CD8-positive, alpha-beta memory T cell (primary cell): ENCODE measurements at regions of chr10 and their contacts with region 1.

Region 1: DNA sequence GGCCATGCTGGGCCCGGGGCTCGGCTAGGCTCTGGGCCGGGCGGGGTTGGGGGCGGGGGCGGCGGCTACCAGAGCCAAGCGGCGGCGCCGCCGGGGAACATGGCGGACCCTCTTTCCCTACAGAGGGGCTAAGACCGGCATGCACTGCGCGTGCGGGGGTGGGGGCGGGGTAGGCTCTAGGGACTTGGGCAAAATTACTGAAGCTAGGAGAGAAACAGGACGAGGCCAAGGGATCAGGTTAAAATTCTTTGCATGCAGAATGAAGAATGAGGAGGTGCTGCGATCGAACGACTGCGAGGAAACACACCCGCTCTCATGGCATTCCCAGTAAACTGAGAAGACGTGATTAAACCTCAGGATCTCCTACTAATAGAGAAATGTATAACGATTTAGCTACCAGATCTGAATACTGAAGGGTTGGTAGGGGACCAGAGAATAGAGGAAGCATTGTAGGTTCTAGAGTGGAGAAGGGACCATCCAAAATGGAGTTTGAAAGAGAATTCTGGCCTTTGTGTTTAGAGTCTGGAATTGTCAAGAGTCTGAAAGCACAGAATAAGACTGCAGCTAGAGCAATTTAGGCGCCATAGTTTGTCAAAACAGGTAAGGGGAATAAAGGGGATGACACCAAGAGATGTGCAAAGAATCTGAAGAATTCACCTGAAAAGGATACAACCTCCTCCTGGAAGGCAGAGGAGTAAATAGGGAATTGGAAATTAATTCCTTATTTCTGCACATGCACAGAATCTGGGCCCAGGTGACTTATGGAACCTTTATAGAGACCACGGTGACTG is at the start of gene PPP3CB:
- DNase-seq: peak; percentile 82 to 95 (median 86)
- H3K4me3 ChIP-seq: peak within 1 kb of the TSS; percentile 94
- H3K4me3 Mint-ChIP-seq: peak within 1 kb of the TSS; percentile 86 to 97 (median 94)
- H3K27ac ChIP-seq: peak within 1 kb of the TSS; percentile 92
- H3K27ac Mint-ChIP-seq: peak within 1 kb of the TSS; percentile 69 to 99 (median 96)
- H3K4me1 ChIP-seq: peaks cover 44% of the 10 kb centered on the region
- H3K4me1 Mint-ChIP-seq: peaks cover 47 to 59% (median 58%) of the 10 kb centered on the region in 3 donors
- H3K27me3 ChIP-seq: no peaks in the 10 kb centered on the region
- H3K27me3 Mint-ChIP-seq: no peaks in the 10 kb centered on the region
- total RNA-seq, gene PPP3CB: 44.0 to 44.1 TPM

Region 2: GRCh38 chr10:73432646-73433537 is 63.2 kb before region 1 on chr10:
- CTCF ChIA-PET with region 1: no interaction called
- POLR2A ChIA-PET with region 1: no interaction called
- DNase-seq: no peak
- H3K4me3 ChIP-seq: no peak overlapping the region
- H3K4me3 Mint-ChIP-seq: no peak overlapping the region
- H3K27ac ChIP-seq: no peak overlapping the region
- H3K27ac Mint-ChIP-seq: peak overlapping the region in 7 of 8 donors; percentile 14 to 80 (median 54)
- H3K4me1 ChIP-seq: peaks cover 9% of the 10 kb centered on the region
- H3K4me1 Mint-ChIP-seq: peaks cover 3 to 12% (median 10%) of the 10 kb centered on the region in 3 donors
- H3K27me3 ChIP-seq: no peaks in the 10 kb centered on the region
- H3K27me3 Mint-ChIP-seq: no peaks in the 10 kb centered on the region

Region 3: GRCh38 chr10:73480158-73480557 is 15.9 kb before region 1 on chr10:
- CTCF ChIA-PET with region 1: interaction called, 3 read pairs
- POLR2A ChIA-PET with region 1: interaction called, 16 read pairs
- DNase-seq: no peak
- H3K4me3 ChIP-seq: no peak overlapping the region
- H3K4me3 Mint-ChIP-seq: peak overlapping the region in 3 of 7 donors; percentile 1 to 61 (median 56)
- H3K27ac ChIP-seq: no peak overlapping the region
- H3K27ac Mint-ChIP-seq: peak overlapping the region in 4 of 8 donors; percentile 9 to 73 (median 32)
- H3K4me1 ChIP-seq: no peaks in the 10 kb centered on the region
- H3K4me1 Mint-ChIP-seq: peaks cover 24 to 52% (median 44%) of the 10 kb centered on the region in 3 donors
- H3K27me3 ChIP-seq: no peaks in the 10 kb centered on the region
- H3K27me3 Mint-ChIP-seq: no peaks in the 10 kb centered on the region

Region 4: DNA sequence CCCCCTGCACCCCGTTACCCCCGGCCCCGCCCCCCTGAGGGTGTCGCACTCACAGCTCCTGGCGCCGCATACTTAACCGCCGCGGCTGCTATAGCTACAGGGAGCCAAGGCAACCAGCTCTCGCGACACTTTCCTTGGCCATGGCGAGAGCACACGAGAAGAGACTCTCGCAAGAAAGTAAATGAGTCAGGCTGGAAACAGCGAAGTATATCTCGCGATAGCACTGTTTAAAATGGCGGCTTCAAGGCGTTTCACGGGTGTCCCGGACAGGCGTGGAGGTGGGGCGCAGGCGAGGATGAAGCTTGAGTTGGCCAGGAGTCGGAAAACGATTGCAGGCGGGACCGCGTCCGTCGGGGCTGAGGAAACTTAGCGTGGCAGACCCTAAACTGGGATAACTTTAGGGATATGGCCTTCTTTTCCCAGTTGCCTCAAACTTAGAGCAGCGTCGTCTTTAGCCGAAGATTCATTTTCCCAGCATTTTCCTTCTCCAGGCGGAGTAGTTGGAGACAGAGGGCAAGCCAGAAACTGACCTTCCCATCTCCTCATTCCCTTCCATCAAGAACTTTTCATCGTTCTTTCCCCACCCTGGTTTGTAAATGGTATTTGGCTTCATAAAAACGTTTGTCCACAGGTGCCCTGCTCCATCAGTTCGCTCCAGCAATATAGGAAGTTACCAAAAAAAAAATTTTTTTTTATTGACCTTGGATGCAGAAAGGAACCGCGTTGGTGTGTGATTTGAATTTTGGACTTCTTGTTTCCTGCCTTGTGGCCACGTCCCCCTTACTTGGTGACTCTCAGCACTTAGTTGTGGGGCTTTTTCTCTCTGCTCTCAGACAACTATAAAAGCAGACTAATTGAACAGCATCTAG is 130.0 kb after region 1 on chr10:
- CTCF ChIA-PET with region 1: no interaction called
- POLR2A ChIA-PET with region 1: interaction called, 12 read pairs
- DNase-seq: peak; percentile 88 to 97 (median 92)
- H3K4me3 ChIP-seq: peak overlapping the region; percentile 81
- H3K4me3 Mint-ChIP-seq: peak overlapping the region; percentile 91 to 98 (median 96)
- H3K27ac ChIP-seq: peak overlapping the region; percentile 86
- H3K27ac Mint-ChIP-seq: peak overlapping the region; percentile 88 to 99 (median 96)
- H3K4me1 ChIP-seq: peaks cover 6% of the 10 kb centered on the region
- H3K4me1 Mint-ChIP-seq: peaks cover 15 to 29% (median 21%) of the 10 kb centered on the region in 3 donors
- H3K27me3 ChIP-seq: no peaks in the 10 kb centered on the region
- H3K27me3 Mint-ChIP-seq: no peaks in the 10 kb centered on the region